HAP-1 (cell line): ENCODE measurements at regions of chr13 and their contacts with region 1.

Region 1: DNA sequence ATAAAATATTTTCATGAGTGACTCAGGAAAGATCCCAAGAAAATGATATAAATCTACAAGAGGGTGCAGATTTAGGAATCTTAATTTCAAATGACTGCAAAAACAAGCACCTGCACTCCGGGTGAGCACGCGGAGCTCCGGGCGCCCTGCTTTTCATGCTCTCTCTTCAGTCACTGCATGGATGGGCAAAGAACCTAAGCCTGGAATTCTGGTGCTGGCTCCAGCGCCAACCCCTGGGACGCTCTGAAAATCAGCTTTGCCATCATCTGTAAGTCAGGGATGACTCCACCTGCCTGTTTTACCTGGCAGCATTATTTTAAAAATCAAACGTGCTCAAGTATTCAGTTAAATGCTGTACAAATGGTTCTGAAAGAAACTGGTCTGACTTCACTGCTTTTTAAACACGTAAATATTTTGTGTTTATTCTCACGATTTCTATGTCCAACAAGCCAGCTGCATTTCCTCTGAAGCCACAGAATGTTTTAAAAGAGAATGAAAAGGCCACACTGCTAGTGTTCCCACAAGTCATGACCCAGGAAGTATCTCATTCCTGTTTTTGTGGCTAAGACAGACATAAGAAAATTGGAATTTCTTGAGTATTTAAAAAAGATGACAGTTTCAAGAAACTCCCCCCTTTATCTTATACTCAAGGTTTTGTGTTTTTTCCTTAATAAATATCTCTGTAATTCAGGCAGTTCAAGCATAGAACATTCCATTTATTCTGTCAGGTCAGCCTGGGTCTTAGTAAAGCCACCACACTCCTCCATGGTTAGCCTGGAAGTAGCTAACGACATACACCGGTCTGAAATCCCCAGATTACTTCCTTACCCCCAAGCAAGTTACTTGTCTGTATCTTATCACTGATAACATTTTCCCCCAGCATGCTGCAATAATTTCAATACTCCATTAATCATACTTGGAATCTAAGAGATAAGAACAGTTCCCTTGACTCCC is 81.1 kb downstream of the COL4A1 start:
- DNase-seq: no peak
- H3K4me3 ChIP-seq: no peak overlapping the region
- H3K4me1 ChIP-seq: no peaks in the 10 kb centered on the region
- H3K27me3 ChIP-seq: no peaks in the 10 kb centered on the region; the same call in 1 of the 2 replicates

Region 2: GRCh38 chr13:110412132-110412914 is 186.4 kb after region 1 on chr13:
- in situ Hi-C with region 1: loop called (anchors 10 kb)
- DNase-seq: peak; percentile 19 to 74
- H3K4me3 ChIP-seq: no peak overlapping the region
- H3K4me1 ChIP-seq: no peaks in the 10 kb centered on the region
- H3K27me3 ChIP-seq: no peaks in the 10 kb centered on the region

Region 3: GRCh38 chr13:110561344-110562035 is 335.6 kb after region 1 on chr13 and contains the start of gene RAB20:
- in situ Hi-C with region 1: no loop called
- DNase-seq: peak; percentile 57 to 89
- H3K4me3 ChIP-seq: peak within 1 kb of the TSS; percentile 74
- H3K4me1 ChIP-seq: peaks cover 5% of the 10 kb centered on the region; the same call in 1 of the 2 replicates
- H3K27me3 ChIP-seq: no peaks in the 10 kb centered on the region